Calu3 (cell line): ENCODE measurements at regions of chr13 and their contacts with region 1.

Region 1: GRCh38 chr13:105920375-105920774 is 615.1 kb downstream of the EFNB2 start:
- DNase-seq: no peak
- H3K4me3 Mint-ChIP-seq: no peak overlapping the region
- H3K27ac Mint-ChIP-seq: peak overlapping the region; percentile 58
- H3K4me1 Mint-ChIP-seq: peaks cover 9% of the 10 kb centered on the region
- H3K27me3 Mint-ChIP-seq: no peaks in the 10 kb centered on the region
- CTCF ChIP-seq: no peak

Region 2: GRCh38 chr13:105979131-105980011 is 59.0 kb after region 1 on chr13:
- CTCF ChIA-PET with region 1: no interaction called
- intact Hi-C with region 1: loop called (anchors 5 kb)
- DNase-seq: no peak
- H3K4me3 Mint-ChIP-seq: no peak overlapping the region
- H3K27ac Mint-ChIP-seq: no peak overlapping the region
- H3K4me1 Mint-ChIP-seq: no peaks in the 10 kb centered on the region
- H3K27me3 Mint-ChIP-seq: no peaks in the 10 kb centered on the region
- CTCF ChIP-seq: no peak